Psoas muscle (tissue), 8 donors: ENCODE measurements at regions of chrX and their contacts with region 1.

Region 1: DNA sequence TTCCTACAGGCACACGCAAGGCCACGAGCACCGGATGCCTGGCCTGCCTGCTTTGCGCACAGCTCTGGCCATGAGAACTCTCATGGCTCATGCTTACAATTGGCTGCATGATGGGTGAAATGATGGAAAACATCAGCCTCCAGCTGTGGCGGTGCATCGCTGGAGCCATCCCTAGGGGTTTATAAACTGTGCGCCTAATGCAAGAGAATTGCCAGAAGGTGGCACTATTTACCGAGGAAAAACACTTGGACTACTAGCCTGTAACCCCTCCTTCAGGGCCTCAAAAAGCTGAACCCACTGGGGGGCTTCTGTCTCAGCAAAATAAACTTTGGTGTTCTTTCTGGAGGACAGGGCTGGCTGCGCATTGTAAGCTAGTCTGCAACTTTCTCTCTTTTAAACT is 51.9 kb downstream of the PHKA2 start:
- DNase-seq: no peak
- ATAC-seq: peak in 2 of 4 donors; percentile 45 to 61
- H3K4me3 ChIP-seq: no peak overlapping the region
- H3K27ac ChIP-seq: no peak overlapping the region
- H3K4me1 ChIP-seq: no peaks in the 10 kb centered on the region
- H3K27me3 ChIP-seq: no peaks in the 10 kb centered on the region
- CTCF ChIP-seq: peak; percentile 20

Region 2: GRCh38 chrX:18617407-18617750 is 314.6 kb before region 1 on chrX:
- intact Hi-C with region 1: no loop called
- DNase-seq: no peak
- ATAC-seq: no peak
- H3K4me3 ChIP-seq: no peak overlapping the region
- H3K27ac ChIP-seq: no peak overlapping the region
- H3K4me1 ChIP-seq: no peaks in the 10 kb centered on the region
- H3K27me3 ChIP-seq: no peaks in the 10 kb centered on the region
- CTCF ChIP-seq: no peak

Region 3: DNA sequence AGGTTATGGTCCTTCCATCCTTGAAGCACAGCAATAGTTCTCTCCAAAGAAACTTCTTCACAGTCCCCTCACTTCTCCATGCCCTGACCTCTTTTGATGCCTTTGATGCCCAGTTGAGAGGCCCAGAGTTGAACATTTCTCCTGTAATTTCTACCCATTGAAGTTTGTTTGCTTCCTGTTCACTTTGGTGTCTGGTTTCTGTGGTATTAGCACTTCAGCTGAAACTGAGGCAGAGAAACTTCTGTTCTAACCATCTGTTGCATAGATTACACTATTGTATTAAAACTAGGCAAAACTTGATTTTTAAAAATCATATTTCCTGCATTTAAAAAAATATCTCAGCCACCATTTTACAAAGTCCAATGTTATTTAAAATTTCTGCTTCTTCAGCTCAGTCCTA is 280.1 kb after region 1 on chrX:
- intact Hi-C with region 1: no loop called
- DNase-seq: no peak
- ATAC-seq: no peak
- H3K4me3 ChIP-seq: no peak overlapping the region
- H3K27ac ChIP-seq: no peak overlapping the region
- H3K4me1 ChIP-seq: no peaks in the 10 kb centered on the region
- H3K27me3 ChIP-seq: no peaks in the 10 kb centered on the region
- CTCF ChIP-seq: no peak

Region 4: GRCh38 chrX:19334945-19335626 is 403.1 kb after region 1 on chrX:
- intact Hi-C with region 1: loop called (anchors 2 to 10 kb)
- DNase-seq: no peak
- ATAC-seq: no peak
- H3K4me3 ChIP-seq: no peak overlapping the region
- H3K27ac ChIP-seq: no peak overlapping the region
- H3K4me1 ChIP-seq: no peaks in the 10 kb centered on the region
- H3K27me3 ChIP-seq: no peaks in the 10 kb centered on the region
- CTCF ChIP-seq: no peak

Region 5: GRCh38 chrX:19893711-19894110 is 961.7 kb after region 1 on chrX:
- intact Hi-C with region 1: no loop called
- DNase-seq: no peak
- ATAC-seq: no peak
- H3K4me3 ChIP-seq: no peak overlapping the region
- H3K27ac ChIP-seq: no peak overlapping the region
- H3K4me1 ChIP-seq: no peaks in the 10 kb centered on the region
- H3K27me3 ChIP-seq: peaks cover 0 to 16% (median 0%) of the 10 kb centered on the region in 3 donors
- CTCF ChIP-seq: no peak